ENCODE measurements at regions of chr5 and their contacts with region 1.

Region 1: GRCh38 chr5:158064334-158065123 is 205.6 kb upstream of the CLINT1 start:
- DNase-seq: peak in 5 of 7 donors; percentile 29 to 69 (median 47)
- H3K4me3 ChIP-seq: no peak overlapping the region
- H3K27ac ChIP-seq: peak overlapping the region in 4 of 5 donors; percentile 30 to 57 (median 50)
- H3K4me1 ChIP-seq: peaks cover 6 to 40% of the 10 kb centered on the region in 2 donors
- H3K27me3 ChIP-seq: no peaks in the 10 kb centered on the region
- CTCF ChIP-seq: no peak
- POLR2A ChIP-seq: no peak

Region 2: DNA sequence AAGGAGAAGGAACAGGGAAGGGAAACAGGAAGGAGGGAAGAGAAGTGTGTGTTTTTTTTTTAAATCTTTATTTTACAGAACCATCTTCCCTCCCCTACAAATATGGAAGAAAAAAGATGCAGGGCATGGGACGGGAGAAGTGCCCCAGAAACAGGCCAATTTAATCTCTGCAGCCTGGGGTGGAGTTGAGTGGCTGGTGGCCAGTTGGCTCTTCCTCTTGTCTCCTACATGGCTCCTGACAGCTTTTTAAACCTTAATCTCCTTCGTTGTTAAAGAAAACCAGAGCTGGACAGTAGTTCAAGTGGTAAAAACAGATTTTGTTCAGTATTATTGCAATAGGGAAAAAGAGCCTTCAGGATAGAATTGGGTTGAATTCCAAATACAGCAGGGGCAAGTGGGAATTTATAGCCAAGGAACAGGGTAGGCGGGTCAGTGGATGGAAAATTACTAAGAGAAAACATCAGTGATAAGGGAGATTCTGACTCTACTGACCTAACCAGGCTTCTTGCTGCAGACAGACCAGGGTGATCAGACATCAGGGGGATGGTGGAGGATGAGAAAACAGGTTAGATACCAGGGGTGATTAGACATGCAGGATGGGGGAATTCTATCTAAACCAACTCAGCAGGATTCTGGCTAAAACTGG is 80.5 kb before region 1 on chr5:
- intact Hi-C with region 1: loop called in 1 of 2 experiments (anchors 5 kb)
- DNase-seq: no peak
- H3K4me3 ChIP-seq: no peak overlapping the region
- H3K27ac ChIP-seq: no peak overlapping the region
- H3K4me1 ChIP-seq: no peaks in the 10 kb centered on the region
- H3K27me3 ChIP-seq: no peaks in the 10 kb centered on the region
- CTCF ChIP-seq: no peak
- POLR2A ChIP-seq: no peak